Activated T-helper 1 cell treated with anti-CD3 and anti-CD28 coated beads, Interleukin-12 subunit alpha, Interleukin-12 subunit beta, Interleukin-2, Interleukin-4 antibody, amounts not matched to agents 30 ng/mL and 10 ng/mL and 1 ng/mL, durations not matched to agents 14 hours and 24 hours and 36 hours (primary cell): ENCODE measurements at regions of chr3 and their contacts with region 1.

Region 1: GRCh38 chr3:18679238-18679637 is 254.1 kb upstream of the SATB1 start:
- DNase-seq: peak; percentile 62
- H3K4me3 Mint-ChIP-seq: peak overlapping the region; percentile 19
- H3K27ac Mint-ChIP-seq: peak overlapping the region; percentile 77
- H3K4me1 Mint-ChIP-seq: peaks cover 89% of the 10 kb centered on the region
- H3K27me3 Mint-ChIP-seq: no peaks in the 10 kb centered on the region

Region 2: DNA sequence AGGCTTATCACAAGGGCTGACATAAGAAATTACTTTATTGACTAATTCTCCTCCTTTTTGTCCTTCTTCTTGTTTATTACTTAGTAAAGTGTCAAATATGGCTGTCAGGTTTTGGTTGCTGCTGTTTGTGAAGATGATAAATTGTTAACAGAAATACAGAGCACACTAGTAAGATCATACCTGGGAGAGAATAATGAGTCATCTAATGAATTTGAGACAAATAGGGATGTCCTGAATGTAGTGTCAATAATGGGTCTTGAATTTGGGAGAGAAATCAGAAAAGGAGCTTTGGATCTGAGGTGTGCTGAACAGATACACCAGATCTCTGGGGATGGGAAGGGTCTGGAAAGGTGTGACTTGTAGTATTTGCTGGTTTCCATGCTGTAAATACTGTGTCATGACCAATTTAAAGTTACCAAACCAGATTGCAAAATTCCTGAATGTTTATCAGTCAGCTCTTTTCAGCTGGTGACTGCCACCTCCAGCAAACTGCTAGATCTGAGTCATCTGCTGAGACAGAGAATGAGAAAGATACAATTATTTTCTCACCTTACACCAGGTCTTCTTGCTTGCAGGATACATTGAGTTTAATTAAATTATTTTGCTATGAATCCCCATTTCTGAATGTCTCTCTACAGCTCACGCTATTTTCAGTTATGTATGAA is 177.4 kb before region 1 on chr3:
- intact Hi-C with region 1: loop called (anchors 5 kb)
- DNase-seq: no peak
- H3K4me3 Mint-ChIP-seq: no peak overlapping the region
- H3K27ac Mint-ChIP-seq: peak overlapping the region; percentile 62
- H3K4me1 Mint-ChIP-seq: peaks cover 47% of the 10 kb centered on the region
- H3K27me3 Mint-ChIP-seq: no peaks in the 10 kb centered on the region

Region 3: GRCh38 chr3:18597919-18598318 is 81.3 kb before region 1 on chr3:
- intact Hi-C with region 1: no loop called
- DNase-seq: no peak
- H3K4me3 Mint-ChIP-seq: no peak overlapping the region
- H3K27ac Mint-ChIP-seq: no peak overlapping the region
- H3K4me1 Mint-ChIP-seq: no peaks in the 10 kb centered on the region
- H3K27me3 Mint-ChIP-seq: no peaks in the 10 kb centered on the region

Region 4: DNA sequence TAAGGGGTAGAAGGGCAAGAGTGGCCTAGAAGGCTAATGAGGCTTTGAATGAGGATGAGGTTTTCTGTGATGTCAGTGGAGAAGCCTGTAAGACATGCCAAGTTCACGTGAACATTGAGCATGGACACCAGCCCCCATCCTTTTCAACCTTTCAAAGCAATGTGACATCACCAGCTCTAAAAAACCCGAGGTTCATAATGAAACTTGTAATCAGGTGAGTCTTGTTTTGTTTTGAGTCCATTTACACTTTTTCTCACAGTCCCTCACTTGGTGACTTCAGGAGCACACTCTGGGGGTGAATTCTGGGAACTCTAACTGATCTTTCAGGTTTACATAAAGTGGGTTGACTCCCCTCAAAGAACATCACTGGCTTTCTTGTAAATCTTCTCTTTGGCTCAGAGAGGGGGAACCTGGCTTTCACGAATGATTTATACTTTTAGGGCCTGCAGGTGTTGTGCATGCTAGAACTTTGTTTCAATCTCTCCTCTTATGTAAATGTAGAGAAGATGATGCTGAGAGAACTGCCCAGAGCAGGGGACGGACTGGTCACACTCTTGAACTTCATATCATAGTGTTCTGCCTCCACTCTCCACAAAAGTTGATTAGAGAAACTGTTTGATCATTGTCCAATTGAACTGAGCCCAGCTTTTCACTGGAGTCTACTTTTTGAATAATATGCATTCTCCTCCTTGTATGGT is 29.4 kb before region 1 on chr3:
- intact Hi-C with region 1: loop called (anchors 1 kb)
- DNase-seq: peak; percentile 70
- H3K4me3 Mint-ChIP-seq: peak overlapping the region; percentile 59
- H3K27ac Mint-ChIP-seq: peak overlapping the region; percentile 94
- H3K4me1 Mint-ChIP-seq: peaks cover 94% of the 10 kb centered on the region
- H3K27me3 Mint-ChIP-seq: no peaks in the 10 kb centered on the region

Region 5: GRCh38 chr3:18660059-18660458 is 19.2 kb before region 1 on chr3:
- intact Hi-C with region 1: loop called (anchors 1 kb)
- DNase-seq: no peak
- H3K4me3 Mint-ChIP-seq: no peak overlapping the region
- H3K27ac Mint-ChIP-seq: peak overlapping the region; percentile 4
- H3K4me1 Mint-ChIP-seq: peaks cover 79% of the 10 kb centered on the region
- H3K27me3 Mint-ChIP-seq: no peaks in the 10 kb centered on the region